ENCODE measurements at regions of chr6 and their contacts with region 1.

Region 1: DNA sequence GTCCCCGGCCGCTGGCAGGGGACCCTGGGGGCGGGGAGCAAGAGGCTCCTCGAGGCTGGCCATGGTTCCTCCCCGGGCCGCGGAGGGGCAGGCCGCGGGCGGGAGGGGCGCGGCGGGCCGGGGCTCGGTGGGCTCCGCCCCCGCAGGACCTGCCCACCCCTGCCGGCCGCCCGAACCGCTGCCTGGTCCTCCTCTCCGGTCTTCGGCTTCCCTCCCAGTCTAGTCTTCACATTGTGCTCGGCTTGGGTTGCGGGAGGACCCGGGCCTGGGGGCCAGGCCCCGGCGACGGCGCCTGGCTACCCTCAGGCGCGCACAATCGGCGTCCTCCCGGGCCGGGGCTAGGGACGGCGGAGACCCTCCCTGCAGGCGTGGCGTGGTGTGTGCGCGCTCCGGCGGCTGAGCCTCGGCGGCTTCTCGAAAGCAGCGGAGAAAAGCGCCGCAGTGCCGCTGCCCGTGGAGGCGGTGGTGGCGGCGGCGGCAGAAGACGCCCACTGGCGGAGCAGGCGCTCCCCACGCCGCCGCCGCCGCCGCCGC is at the start of gene PDE10A:
- DNase-seq: no peak
- H3K4me3 Mint-ChIP-seq: no peak within 1 kb of the TSS
- H3K27ac Mint-ChIP-seq: no peak within 1 kb of the TSS
- H3K4me1 Mint-ChIP-seq: peaks cover 2% of the 10 kb centered on the region
- H3K27me3 Mint-ChIP-seq: peaks cover 54% of the 10 kb centered on the region
- total RNA-seq, gene PDE10A: not detected in 2 replicates

Region 2: DNA sequence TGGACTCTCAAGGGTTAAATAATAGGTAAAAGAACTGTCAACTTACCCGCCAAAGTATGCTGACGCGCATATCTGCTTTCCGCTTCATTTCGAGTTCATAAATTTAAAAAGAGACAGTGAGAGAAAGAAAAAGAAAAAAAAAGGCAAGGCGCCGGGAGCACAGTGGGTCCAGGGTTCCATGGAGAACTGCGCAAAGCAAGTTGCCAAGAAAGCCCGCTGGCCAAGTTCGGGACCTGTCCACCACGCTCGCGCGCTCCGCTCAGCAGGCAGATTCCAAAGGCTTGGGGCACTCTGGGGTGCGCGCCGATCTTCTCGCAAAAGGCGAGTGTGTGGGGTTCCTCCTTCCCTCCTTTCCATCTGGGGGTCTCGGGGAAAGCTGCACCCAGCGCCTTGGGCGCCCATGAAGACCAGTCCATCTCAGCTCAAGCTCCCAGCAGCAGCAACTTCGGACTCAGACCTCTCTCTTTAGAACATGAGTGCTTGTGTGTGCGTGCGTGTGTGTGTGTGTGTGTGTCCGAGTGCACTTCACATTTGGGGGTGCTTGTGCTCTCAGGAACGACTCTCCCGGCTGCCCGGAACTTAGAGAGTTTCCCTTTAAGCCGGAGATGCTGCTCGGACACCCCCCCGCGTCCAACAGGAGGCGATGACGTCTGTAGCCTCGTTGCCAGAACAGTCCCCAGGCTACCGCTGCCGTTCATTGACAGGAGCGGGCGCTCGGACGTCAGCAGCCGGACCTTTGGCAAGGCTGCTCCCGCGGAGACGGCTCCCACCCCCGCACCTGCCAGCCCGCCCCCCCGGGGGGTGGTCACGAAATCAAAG is 324.9 kb after region 1 on chr6:
- intact Hi-C with region 1: loop called (anchors 10 kb)
- DNase-seq: no peak
- H3K4me3 Mint-ChIP-seq: no peak overlapping the region
- H3K27ac Mint-ChIP-seq: no peak overlapping the region
- H3K4me1 Mint-ChIP-seq: peaks cover 2% of the 10 kb centered on the region
- H3K27me3 Mint-ChIP-seq: peaks cover 52% of the 10 kb centered on the region

Region 3: GRCh38 chr6:166005944-166006899 is 343.4 kb after region 1 on chr6:
- intact Hi-C with region 1: loop called (anchors 5 kb)
- DNase-seq: peak; percentile 35
- H3K4me3 Mint-ChIP-seq: no peak overlapping the region
- H3K27ac Mint-ChIP-seq: no peak overlapping the region
- H3K4me1 Mint-ChIP-seq: no peaks in the 10 kb centered on the region
- H3K27me3 Mint-ChIP-seq: peaks cover 53% of the 10 kb centered on the region

Region 4: DNA sequence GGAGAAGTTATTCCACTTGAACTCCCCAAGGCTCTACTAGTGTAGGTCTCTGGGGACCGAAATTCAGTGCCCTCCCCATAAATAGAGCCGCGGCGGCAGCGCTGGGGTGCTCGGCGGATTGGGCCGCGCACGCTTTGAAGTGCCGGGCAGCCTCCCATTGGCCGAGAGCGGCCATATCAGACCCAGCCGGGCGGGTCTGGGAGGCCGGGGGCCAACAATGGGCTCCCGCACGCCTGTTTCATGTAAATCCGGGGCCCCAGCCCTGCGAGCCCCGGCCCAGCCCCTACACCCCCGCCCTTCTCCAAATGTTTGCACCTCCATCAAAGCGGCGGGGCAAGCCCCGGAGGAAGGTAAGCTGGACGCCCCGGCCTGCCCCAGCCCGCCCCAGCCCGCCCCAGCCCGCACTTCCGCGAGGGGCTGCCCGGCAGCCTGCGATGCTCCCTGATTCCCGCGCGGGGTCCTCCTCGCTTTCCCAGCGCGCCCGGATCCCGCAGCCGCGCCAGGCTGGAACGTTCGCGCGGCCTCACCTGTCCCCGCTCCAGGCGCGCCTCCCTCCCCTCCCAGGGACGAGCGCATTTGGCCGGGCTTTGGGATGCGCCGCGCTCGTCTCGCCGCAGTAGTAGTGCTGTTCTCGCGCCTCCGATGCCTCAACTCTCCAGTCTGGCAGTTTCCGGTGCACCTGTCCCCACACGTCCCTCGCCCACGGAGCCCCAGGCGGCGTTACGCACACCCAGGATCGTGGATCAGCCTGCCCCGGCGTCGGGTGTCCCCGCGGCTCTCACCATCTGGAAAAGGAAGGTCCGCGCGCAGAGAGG is 505.2 kb after region 1 on chr6 and contains the start of gene TBXT:
- intact Hi-C with region 1: loop called (anchors 10 kb)
- DNase-seq: no peak
- H3K4me3 Mint-ChIP-seq: peak within 1 kb of the TSS; percentile 69
- H3K27ac Mint-ChIP-seq: peak within 1 kb of the TSS; percentile 15
- H3K4me1 Mint-ChIP-seq: peaks cover 5% of the 10 kb centered on the region
- H3K27me3 Mint-ChIP-seq: peaks cover 64% of the 10 kb centered on the region
- total RNA-seq, gene TBXT: not detected in 2 replicates